ENCODE measurements at regions of chr4 and their contacts with region 1.

Region 1: GRCh38 chr4:88523325-88524129 is at the start of gene PYURF:
- DNase-seq: peak; percentile 86 to 98 (median 95)

Region 2: DNA sequence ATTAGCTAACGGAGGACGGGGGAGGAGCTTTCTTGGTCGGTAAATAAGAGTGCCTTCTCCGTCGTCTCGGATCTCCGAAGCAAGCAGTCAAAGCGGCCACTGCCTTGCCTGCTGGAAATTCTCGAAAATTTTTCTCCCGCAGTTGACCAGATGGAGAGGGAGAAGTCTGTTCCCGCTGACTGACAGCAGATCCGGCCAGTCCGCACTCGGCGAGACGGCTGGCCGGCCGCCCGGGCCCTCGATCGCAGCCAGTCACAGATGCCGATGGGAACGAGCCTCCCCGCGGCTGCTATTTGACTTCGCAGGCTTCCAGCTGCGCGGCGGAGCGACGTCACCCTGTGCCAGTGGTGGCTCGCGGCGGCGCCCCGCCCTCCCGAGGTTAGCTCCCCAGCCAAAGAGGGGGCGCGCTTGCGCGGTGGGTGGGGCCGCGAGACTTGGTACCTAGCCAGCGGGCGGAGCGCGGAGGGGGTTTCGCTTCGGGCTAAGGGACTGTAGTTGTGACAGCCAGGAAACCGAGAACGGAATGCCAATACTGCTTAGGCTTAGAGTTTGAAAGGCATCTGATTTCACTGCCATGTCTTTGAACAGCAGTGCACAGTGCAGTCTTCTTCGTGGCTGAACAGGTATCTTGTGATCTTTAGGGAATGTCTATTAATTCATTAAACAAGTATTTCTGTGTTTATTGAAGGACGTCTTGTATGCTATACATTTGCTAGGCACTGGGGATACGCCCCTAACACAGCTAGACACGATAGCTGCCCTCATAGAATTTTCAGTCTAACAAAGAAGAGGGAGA is 238.9 kb before region 1 on chr4 and contains the start of gene PPM1K:
- intact Hi-C with region 1: loop called (anchors 10 kb)
- DNase-seq: peak; percentile 98 to 100 (median 99)

Region 3: DNA sequence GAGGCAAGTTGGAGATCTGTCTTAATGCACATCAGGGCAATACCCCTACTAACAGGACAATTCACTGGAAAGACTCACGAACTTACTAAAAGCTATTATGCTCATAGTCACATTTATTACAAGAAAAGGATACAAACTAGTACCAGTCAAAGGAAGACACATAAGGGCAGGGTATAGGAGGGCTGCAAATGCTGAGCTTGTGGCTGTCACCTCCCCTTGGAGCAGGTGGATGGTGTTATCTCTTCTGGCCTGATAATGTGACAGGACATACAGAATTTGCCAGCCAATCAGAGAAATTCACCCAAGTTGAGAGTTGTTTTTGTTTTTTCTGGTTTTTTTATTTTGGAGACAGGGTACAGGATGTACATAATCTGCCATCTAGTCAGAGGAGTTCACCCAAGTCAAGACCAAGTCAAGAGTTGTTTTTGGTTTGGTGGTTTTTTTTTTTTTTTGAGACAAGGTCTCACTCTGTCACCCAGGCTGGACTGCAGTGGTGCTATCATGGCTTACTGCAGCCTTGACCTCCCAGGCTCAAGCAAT is 57.8 kb before region 1 on chr4:
- intact Hi-C with region 1: no loop called
- DNase-seq: no peak

Region 4: DNA sequence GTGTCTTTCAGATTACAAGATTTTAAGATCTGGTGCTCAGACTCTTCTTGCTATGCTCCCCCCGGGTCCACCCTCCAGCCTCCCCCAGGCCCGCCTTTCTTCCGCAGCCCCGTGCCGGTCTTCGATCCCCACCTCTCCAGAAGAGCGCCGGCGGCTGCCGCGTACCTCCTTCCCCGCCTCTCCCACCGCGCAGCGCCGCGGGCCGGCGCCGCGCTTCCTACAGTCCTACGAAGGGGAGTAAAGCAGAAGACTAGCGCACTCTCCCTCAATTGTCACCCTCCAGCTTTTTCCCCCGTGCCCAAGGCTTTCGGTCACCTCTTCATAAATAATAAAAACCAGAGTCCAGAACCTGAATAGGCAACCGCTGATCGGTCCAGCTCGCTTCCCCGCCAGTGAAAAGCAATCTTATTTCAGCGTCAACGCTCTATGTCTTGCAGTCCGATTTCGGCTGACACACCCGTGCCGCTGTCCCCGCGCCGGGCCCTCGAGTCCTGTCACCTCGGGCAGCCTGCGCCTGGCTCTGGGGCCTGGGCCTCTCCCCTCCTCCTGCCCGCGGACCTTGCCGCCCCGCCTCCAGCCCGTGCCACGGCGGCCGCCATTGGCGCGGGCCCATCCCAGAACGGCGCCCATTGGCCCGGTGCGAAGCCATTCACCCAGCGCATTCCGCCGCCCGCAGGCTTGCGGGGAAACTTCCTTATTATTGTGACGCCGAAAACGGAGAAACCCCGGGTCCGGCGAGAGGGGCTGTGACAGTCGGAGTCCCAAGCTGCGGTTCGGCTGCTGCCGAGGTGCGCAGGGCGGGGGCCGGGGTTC is 68.5 kb after region 1 on chr4 and contains the start of gene HERC3:
- intact Hi-C with region 1: loop called (anchors 5 kb)
- DNase-seq: peak; percentile 79 to 97 (median 94)

Region 5: DNA sequence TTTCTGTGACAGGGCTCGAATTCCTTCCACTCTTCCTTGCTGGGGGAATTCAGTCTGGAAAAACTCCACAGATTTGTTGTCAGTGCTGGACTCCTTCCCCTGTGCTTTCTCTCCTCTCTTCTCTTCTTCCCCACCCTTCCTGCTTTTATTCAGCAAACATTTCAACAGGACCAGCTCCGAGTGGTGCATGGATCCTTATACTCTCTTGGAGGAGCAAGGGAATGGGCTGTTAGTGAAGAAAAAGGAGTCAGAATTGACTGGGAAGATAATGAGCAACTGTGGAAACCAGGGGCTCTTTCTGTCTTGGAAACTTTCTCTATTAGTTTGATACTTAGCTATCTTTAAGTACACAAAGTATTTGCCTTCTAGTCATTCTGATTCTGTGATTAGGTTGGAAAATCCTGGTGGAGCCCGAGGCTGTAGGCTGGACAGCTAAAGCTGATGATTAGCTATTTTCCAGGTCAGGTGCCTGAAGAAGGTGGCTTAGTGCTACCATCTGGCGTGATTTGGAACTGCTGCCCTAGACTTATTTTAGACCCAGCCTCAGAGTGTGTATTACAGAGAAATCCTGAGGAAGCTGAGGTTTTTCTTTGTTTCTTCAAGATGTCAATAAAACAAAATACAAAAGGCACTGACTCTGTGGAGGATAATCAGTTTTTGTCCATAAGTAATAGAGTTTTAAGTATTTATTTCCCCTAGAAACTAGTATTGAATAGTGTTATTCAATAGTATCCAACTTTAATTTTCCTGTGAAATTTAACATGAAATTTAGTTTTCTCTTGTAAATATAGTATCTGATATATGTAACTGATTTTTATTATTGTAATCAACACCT is 135.7 kb after region 1 on chr4:
- intact Hi-C with region 1: loop called (anchors 10 kb)
- DNase-seq: peak in 31 of 42 donors; percentile 10 to 73 (median 42)

Region 6: DNA sequence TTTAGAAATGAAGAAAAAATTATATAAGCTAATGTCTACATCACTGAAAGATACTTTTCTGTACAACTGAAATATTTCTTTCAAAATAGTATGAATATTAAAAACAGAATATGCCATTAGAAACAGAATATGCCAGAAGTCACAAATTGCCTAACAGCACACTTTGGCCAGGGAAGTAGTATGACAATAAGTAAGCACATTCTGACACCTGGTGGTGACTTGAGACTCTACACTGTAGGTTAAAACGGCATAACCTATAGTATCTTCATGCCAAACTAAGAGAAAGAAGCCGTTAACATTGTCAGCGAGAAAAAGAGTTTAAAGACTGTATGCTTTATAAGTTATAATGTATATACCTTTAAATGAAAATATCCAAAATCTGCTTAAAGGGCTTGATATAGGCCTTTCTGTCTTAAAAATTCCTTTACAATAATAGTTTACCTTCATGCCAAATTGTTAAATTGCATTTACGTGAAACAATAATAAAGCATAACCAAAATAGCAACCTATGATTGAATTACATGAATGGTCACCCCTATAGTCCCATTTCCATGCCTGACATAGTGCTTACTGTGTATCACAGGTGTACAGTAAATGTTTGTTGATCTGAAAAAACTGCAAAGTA is 500.6 kb after region 1 on chr4:
- intact Hi-C with region 1: loop called (anchors 10 kb)
- DNase-seq: peak in 29 of 42 donors; percentile 13 to 86 (median 61)